ENCODE measurements at regions of chr22 and their contacts with region 1.

Region 1: DNA sequence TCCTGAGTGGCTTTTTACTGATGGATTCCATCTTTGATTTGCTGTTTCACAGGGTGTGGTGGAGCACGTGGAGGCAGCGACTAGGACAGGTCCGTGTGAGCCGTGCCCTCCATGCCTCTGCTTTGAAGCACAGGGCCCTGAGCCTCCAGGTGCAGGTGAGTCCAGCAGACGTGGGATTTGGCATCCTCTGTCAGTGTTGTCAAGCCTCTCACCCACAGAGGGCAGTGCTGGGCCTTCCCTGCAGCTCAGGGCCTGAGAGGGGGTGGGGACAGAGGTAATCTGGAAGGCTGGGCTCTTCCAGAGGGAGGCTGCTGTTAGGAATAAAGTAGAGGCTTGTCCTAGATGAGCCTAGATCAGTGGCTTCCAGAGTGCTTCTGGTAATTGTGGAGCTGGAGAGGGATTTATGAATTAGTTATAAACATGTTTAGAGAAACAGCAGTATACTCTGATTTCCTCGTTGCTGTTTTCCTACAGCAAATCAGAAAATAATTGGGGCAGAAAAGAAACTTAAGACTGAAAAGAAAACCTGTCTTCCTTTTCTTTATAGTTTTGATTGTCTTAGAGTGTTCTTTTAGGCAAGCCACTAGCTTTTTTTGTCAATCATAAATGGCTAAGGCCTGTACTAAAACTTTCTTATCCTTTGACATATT is 65.0 kb downstream of the SFI1 start:
- DNase-seq: peak; percentile 78
- ATAC-seq: peak; percentile 95
- H3K4me3 Mint-ChIP-seq: no peak overlapping the region
- H3K27ac Mint-ChIP-seq: peak overlapping the region; percentile 54
- H3K4me1 Mint-ChIP-seq: peaks cover 10% of the 10 kb centered on the region
- H3K27me3 Mint-ChIP-seq: no peaks in the 10 kb centered on the region
- CTCF ChIP-seq: peak; percentile 71

Region 2: GRCh38 chr22:31544481-31545480 is 16.6 kb before region 1 on chr22:
- CTCF ChIA-PET with region 1: interaction called, 10 read pairs
- POLR2A ChIA-PET with region 1: no interaction called
- intact Hi-C with region 1: no loop called
- DNase-seq: no peak
- ATAC-seq: no peak
- H3K4me3 Mint-ChIP-seq: no peak overlapping the region
- H3K27ac Mint-ChIP-seq: peak overlapping the region; percentile 30
- H3K4me1 Mint-ChIP-seq: peaks cover 25% of the 10 kb centered on the region
- H3K27me3 Mint-ChIP-seq: no peaks in the 10 kb centered on the region
- CTCF ChIP-seq: no peak

Region 3: GRCh38 chr22:31579835-31580242 is 18.5 kb after region 1 on chr22:
- CTCF ChIA-PET with region 1: interaction called, 10 read pairs
- POLR2A ChIA-PET with region 1: interaction called, 4 read pairs
- intact Hi-C with region 1: no loop called
- DNase-seq: no peak
- ATAC-seq: no peak
- H3K4me3 Mint-ChIP-seq: no peak overlapping the region
- H3K27ac Mint-ChIP-seq: peak overlapping the region; percentile 58
- H3K4me1 Mint-ChIP-seq: peaks cover 30% of the 10 kb centered on the region
- H3K27me3 Mint-ChIP-seq: no peaks in the 10 kb centered on the region
- CTCF ChIP-seq: no peak

Region 4: GRCh38 chr22:31692186-31692886 is 131.0 kb after region 1 on chr22:
- CTCF ChIA-PET with region 1: no interaction called
- POLR2A ChIA-PET with region 1: no interaction called
- intact Hi-C with region 1: no loop called
- DNase-seq: peak; percentile 18
- ATAC-seq: peak; percentile 83
- H3K4me3 Mint-ChIP-seq: no peak overlapping the region
- H3K27ac Mint-ChIP-seq: peak overlapping the region; percentile 61
- H3K4me1 Mint-ChIP-seq: peaks cover 19% of the 10 kb centered on the region
- H3K27me3 Mint-ChIP-seq: no peaks in the 10 kb centered on the region
- CTCF ChIP-seq: no peak

Measured in activated CD8-positive, alpha-beta T cell treated with anti-CD3 and anti-CD28 coated beads for 36 hours (primary cell).